Lower leg skin (tissue), 4 donors: ENCODE measurements at regions of chr19 and their contacts with region 1.

Region 1: DNA sequence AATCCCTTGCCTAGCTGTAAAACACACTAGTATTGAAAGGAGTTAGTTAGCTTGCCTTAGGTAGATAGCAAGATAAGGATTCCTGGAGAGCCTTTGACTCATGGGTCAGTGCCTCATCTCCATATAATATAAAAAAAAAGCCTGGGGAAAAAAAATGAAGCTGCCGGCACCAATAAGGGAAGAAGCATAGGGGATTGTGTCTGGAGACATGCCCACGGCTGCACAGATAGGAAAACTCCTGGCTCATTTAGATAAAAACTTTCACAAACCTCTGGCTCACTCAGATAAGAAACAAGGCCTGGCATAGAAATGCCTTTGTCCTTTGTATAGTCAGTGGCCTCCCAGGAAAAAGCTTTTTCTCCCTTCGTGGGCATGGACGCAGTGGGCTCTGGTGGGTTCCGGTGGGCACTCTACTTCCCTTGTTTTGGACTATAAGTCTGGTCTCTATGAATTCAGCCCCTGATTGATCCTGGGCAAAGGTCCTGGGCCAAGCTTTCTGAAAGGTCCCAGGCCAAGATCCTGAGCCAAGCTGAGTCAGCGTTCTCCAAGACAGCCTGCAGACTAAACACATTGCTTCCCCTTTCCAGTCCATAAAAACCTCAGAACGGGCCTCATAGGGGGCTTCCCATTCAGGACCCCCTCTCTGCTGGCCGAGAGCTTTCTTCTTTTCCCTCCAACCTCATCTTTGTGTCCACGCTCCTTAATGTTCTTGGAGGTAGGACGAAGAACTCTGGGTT is 4.9 kb upstream of the OR7A17 start:
- DNase-seq: no peak
- H3K4me3 ChIP-seq: no peak overlapping the region
- CTCF ChIP-seq: no peak
- POLR2A ChIP-seq: no peak

Region 2: GRCh38 chr19:14599548-14600147 is 291.2 kb before region 1 on chr19:
- intact Hi-C with region 1: loop called (anchors 10 kb)
- DNase-seq: no peak
- H3K4me3 ChIP-seq: no peak overlapping the region
- CTCF ChIP-seq: no peak
- POLR2A ChIP-seq: no peak

Region 3: GRCh38 chr19:14786421-14786851 is 104.4 kb before region 1 on chr19:
- intact Hi-C with region 1: loop called (anchors 10 kb)
- DNase-seq: peak in 1 of 2 donors; percentile 78
- H3K4me3 ChIP-seq: no peak overlapping the region
- CTCF ChIP-seq: peak in 1 of 3 donors; percentile 15
- POLR2A ChIP-seq: no peak